A673 (cell line): ENCODE measurements at regions of chr10 and their contacts with region 1.

Region 1: GRCh38 chr10:44513591-44513990 is 128.7 kb upstream of the CXCL12 start:
- DNase-seq: no peak
- H3K4me3 ChIP-seq: no peak overlapping the region
- H3K27ac ChIP-seq: no peak overlapping the region
- H3K4me1 ChIP-seq: no peaks in the 10 kb centered on the region
- H3K27me3 ChIP-seq: no peaks in the 10 kb centered on the region
- CTCF ChIP-seq: no peak

Region 2: GRCh38 chr10:44465401-44466115 is 48.0 kb before region 1 on chr10:
- CTCF ChIA-PET with region 1: no interaction called
- POLR2A ChIA-PET with region 1: no interaction called
- intact Hi-C with region 1: loop called (anchors 5 kb)
- DNase-seq: no peak
- H3K4me3 ChIP-seq: no peak overlapping the region
- H3K27ac ChIP-seq: no peak overlapping the region
- H3K4me1 ChIP-seq: no peaks in the 10 kb centered on the region
- H3K27me3 ChIP-seq: no peaks in the 10 kb centered on the region
- CTCF ChIP-seq: no peak

Region 3: GRCh38 chr10:44500451-44500850 is 13.1 kb before region 1 on chr10:
- CTCF ChIA-PET with region 1: no interaction called
- POLR2A ChIA-PET with region 1: no interaction called
- intact Hi-C with region 1: no loop called
- DNase-seq: no peak
- H3K4me3 ChIP-seq: no peak overlapping the region
- H3K27ac ChIP-seq: no peak overlapping the region
- H3K4me1 ChIP-seq: no peaks in the 10 kb centered on the region
- H3K27me3 ChIP-seq: no peaks in the 10 kb centered on the region
- CTCF ChIP-seq: no peak